Heart left ventricle (tissue), 16 donors: ENCODE measurements at regions of chr5 and their contacts with region 1.

Region 1: DNA sequence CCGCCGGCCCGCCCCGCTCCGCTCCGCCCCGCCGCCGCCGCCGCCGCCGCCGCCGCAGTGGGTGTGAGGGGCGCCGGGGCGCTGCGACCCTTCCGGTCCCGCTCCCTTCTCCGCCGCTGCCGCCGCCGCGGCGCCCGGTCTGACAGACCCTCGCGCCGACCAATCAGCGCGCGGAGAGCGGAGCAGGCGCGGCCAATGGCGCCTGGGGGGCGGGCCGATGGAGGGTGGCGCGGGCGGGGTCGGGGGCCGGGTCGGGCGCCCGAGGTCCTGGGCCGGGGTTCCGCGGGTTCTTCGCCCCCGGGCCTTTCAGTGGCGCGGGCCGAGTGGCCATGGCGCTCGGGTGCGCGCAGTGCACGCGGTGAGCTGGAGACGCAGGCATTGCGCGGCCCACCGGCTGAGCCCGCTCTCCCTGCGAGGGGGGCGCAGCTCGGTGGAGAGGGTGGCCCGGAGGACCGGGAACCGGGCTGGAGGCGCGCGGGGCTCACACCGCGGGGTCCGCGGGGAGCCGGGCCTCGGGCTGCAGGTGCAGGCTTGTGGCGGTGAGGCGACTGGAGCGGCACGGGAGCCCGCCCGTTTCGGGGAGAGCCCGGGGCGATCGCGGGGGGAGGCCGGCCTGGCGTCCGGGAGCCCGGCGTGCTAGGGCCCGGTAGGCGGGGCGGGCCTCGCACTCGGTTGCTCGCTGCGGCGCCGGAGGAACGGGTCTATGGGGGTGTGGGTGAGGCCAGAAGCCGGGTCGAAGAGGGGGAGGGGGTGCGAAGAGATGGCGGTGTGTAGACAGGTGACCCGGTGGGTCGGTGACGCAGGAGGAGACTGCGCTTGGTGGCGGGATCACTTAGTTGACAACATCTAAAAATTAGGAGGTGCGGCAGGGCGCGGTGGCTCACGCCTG is at the start of gene MAPK9:
- DNase-seq: peak; percentile 87 to 93 (median 90)
- ATAC-seq: peak; percentile 73 to 93 (median 91)
- H3K4me3 ChIP-seq: peak within 1 kb of the TSS; percentile 59 to 100 (median 98)
- H3K27ac ChIP-seq: peak within 1 kb of the TSS; percentile 67 to 96 (median 93)
- H3K4me1 ChIP-seq: peaks cover 0 to 31% (median 20%) of the 10 kb centered on the region in 12 donors
- H3K27me3 ChIP-seq: no peaks in the 10 kb centered on the region
- CTCF ChIP-seq: no peak
- POLR2A ChIP-seq: peak in 1 of 2 donors; percentile 69
- total RNA-seq, gene MAPK9: 26.0 to 51.3 (median 41.4) TPM

Region 2: GRCh38 chr5:180328296-180329137 is 36.3 kb after region 1 on chr5:
- intact Hi-C with region 1: loop called in 5 of 10 experiments (anchors 1 to 5 kb)
- DNase-seq: peak; percentile 67 to 90 (median 77)
- ATAC-seq: peak in 3 of 4 donors; percentile 19 to 53 (median 46)
- H3K4me3 ChIP-seq: no peak overlapping the region
- H3K27ac ChIP-seq: no peak overlapping the region
- H3K4me1 ChIP-seq: peaks cover 0 to 8% (median 0%) of the 10 kb centered on the region in 12 donors
- H3K27me3 ChIP-seq: peaks cover 0 to 8% (median 0%) of the 10 kb centered on the region in 9 donors
- CTCF ChIP-seq: peak; percentile 48 to 81 (median 71)
- POLR2A ChIP-seq: no peak

Region 3: DNA sequence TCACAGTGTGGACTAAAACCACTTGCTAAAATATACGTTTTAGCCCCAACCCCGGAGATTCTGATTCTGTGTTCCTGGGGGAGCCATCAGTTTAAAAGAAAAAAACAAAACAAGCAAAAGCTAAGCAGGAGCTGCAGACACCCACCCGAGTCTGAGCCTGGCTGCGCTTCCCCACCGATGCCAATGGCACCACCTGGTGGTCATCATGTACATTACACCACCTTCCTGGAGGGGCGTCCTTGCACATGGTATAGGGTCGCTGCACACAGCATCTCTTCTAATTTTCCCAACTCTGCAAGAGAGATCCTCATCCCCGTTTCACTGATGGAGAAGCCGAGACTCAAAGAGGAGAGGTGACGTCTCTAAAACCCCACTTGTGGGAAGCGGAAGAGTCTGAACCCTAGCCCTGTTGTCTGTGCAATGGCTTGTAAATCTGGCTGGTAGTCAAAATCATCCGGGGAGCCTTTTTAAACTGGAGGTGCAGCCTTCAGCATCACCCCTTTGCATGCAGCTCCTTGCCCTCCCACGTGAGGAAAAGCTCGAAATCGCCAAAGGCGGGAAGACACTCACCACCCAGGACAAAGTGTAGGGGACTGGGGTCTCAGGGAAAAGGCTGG is 178.9 kb after region 1 on chr5:
- intact Hi-C with region 1: loop called (anchors 1 to 5 kb)
- DNase-seq: peak in 3 of 5 donors; percentile 46 to 58 (median 48)
- ATAC-seq: peak; percentile 52 to 81 (median 78)
- H3K4me3 ChIP-seq: no peak overlapping the region
- H3K27ac ChIP-seq: no peak overlapping the region
- H3K4me1 ChIP-seq: peaks cover 0 to 12% (median 0%) of the 10 kb centered on the region in 12 donors
- H3K27me3 ChIP-seq: peaks cover 0 to 5% (median 0%) of the 10 kb centered on the region in 9 donors
- CTCF ChIP-seq: peak; percentile 82 to 95 (median 93)
- POLR2A ChIP-seq: no peak

Region 4: DNA sequence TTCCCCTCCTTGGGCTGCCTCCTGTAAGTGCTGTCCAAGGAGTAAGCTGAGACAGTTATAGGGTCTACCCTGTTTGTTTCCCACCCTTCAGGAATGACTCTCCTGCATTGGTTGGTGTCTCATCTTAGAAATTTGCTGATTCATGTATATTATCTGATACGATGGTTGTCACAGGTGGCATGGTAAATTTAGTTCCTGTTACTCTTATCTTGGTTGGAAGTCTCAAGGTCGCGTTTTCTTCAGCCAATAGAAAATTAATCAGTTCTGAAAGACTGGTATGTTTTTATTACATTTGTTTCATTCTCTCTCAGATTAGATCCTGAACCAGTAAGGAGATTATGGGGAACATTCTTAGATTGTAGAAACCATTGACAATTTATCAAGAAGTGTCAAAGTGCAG is 256.4 kb after region 1 on chr5:
- intact Hi-C with region 1: no loop called
- DNase-seq: no peak
- ATAC-seq: no peak
- H3K4me3 ChIP-seq: no peak overlapping the region
- H3K27ac ChIP-seq: no peak overlapping the region
- H3K4me1 ChIP-seq: peaks cover 0 to 6% (median 0%) of the 10 kb centered on the region in 12 donors
- H3K27me3 ChIP-seq: no peaks in the 10 kb centered on the region
- CTCF ChIP-seq: no peak
- POLR2A ChIP-seq: no peak

Region 5: DNA sequence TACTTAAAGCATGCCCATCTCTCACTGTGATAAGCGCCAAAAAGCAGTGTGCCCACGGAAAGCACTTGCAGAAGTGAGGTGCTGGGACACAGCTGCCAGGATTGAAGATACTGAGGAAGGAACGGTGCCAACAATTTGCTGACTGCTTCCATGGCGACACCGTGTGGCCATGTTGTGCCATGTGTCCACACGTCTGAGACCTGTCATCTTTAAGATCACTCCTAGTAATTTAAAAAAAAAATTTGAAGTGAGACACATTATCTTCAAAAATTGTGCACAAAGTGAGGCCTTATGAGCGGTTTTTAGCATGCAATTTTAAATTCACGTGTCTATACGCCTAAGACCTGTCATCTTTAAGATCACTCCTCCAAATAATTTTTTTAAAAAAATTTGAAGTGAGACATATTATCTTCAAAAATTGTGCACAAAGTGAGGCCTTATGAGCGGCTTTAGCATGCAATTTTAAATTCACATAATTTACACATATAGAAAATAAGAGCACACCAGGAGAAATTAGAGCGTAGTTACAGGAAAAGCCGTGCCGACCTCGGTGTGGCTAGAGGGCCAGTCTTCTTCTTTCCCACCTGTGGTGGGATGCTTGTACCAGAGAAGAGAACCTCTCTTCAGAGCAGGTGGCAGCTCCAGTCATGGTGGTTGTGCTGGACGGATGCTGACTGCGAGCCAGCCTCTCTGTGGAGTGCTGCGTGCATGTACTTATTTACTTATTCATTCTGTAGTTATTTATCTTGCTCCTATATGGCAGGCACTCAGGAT is 378.6 kb after region 1 on chr5:
- intact Hi-C with region 1: loop called in 3 of 10 experiments (anchors 5 to 10 kb)
- DNase-seq: peak in 4 of 5 donors; percentile 32 to 58 (median 50)
- ATAC-seq: peak in 3 of 4 donors; percentile 63 to 75 (median 74)
- H3K4me3 ChIP-seq: no peak overlapping the region
- H3K27ac ChIP-seq: no peak overlapping the region
- H3K4me1 ChIP-seq: peaks cover 0 to 9% (median 0%) of the 10 kb centered on the region in 12 donors
- H3K27me3 ChIP-seq: peaks cover 9 to 29% (median 21%) of the 10 kb centered on the region in 9 donors
- CTCF ChIP-seq: peak; percentile 55 to 80 (median 67)
- POLR2A ChIP-seq: no peak